ENCODE measurements at regions of chr6 and their contacts with region 1.

Region 1: DNA sequence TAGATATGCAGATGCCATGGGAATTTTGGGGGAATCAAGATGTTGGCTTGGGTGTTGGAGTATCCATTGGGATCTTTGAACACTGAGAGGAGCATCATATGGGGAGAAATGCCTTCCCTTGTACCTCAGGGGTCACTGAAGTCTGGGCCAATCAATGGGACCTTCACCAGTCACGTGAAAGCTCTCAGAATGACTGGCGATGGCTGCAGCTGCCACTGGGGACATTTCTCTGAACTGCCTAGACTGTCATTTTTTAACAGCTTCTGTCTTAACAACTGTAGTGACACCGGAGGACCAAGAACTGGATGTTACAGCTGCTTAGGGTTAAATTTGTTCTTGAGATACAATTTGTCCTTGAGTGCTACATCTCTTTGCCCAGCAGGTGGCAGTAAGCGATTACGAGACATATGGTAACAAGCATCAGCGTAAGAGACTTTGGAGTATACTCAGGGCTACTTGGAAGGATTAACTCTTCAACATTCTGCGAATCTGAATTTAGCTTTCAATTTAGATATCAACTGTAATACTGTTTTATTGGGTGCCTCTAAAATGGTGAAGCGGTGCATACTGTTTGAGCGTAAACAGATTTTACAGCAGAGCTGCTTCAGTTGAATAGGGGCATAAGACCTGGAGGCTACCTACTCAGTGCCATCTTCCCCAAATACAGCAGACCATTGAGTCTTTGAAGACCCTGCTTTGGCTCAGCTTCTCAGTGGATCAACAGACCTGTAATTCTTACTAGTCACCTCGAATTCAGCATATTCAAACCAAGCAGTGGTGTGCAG is 36.0 kb downstream of the CCN2 start:
- H3K4me3 Mint-ChIP-seq: no peak overlapping the region
- H3K27ac Mint-ChIP-seq: no peak overlapping the region
- H3K4me1 Mint-ChIP-seq: peaks cover 7% of the 10 kb centered on the region
- H3K27me3 Mint-ChIP-seq: peaks cover 38% of the 10 kb centered on the region

Region 2: GRCh38 chr6:132218059-132218696 is 303.0 kb after region 1 on chr6:
- intact Hi-C with region 1: loop called (anchors 5 kb)
- H3K4me3 Mint-ChIP-seq: no peak overlapping the region
- H3K27ac Mint-ChIP-seq: no peak overlapping the region
- H3K4me1 Mint-ChIP-seq: no peaks in the 10 kb centered on the region
- H3K27me3 Mint-ChIP-seq: no peaks in the 10 kb centered on the region